Activated CD4-positive, alpha-beta T cell treated with anti-CD3 and anti-CD28 coated beads for 36 hours (primary cell): ENCODE measurements at regions of chr5 and their contacts with region 1.

Region 1: GRCh38 chr5:172412724-172413286 is 41.5 kb downstream of the SH3PXD2B start:
- DNase-seq: peak; percentile 46
- ATAC-seq: peak; percentile 20
- H3K4me3 Mint-ChIP-seq: no peak overlapping the region
- H3K27ac Mint-ChIP-seq: peak overlapping the region; percentile 45
- H3K4me1 Mint-ChIP-seq: peaks cover 33% of the 10 kb centered on the region
- H3K27me3 Mint-ChIP-seq: peaks cover 7% of the 10 kb centered on the region

Region 2: GRCh38 chr5:172199446-172199845 is 213.4 kb before region 1 on chr5:
- CTCF ChIA-PET with region 1: no interaction called
- POLR2A ChIA-PET with region 1: no interaction called
- intact Hi-C with region 1: no loop called
- DNase-seq: no peak
- ATAC-seq: no peak
- H3K4me3 Mint-ChIP-seq: no peak overlapping the region
- H3K27ac Mint-ChIP-seq: no peak overlapping the region
- H3K4me1 Mint-ChIP-seq: no peaks in the 10 kb centered on the region
- H3K27me3 Mint-ChIP-seq: peaks cover 3% of the 10 kb centered on the region

Region 3: DNA sequence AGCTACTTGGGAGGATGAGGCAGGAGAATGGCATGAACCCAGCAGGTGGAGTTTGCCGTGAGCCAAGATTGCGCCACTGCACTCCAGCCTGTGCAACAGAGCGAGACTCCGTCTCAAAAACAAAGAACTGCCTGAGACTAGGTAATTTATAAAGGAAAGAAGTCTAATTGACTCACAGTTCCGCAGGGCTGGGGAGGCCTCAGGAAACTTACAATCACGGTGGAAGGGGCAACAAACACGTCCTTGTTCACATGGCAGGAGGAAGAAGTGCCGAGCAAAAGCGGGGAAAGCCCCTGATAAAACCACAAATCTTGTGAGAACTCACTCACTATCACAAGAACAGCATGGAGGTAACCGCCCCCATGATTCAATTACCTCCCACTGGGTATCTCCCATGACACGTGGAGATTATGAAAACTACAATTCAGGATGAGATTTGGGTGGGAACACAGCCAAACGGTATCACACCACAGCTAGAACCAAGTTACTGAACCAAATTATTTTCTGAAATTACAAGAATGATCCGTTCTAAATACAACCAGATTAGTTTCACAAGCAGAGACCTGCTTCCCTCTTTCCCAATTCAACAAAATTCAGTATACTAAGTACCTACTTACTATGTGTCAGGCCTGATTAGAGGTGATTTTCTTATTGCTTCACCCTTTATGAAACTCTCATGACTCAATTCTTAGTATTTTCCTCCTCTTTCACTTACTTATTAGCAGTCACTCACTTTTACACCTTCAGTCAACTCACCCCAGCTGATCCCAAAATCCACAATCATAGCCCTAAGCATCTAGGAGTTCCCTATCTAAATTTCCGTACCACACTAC is 137.7 kb before region 1 on chr5:
- CTCF ChIA-PET with region 1: no interaction called
- POLR2A ChIA-PET with region 1: interaction called, 3 read pairs
- intact Hi-C with region 1: loop called in 1 of 2 experiments (anchors 1 kb)
- DNase-seq: peak; percentile 77
- ATAC-seq: peak; percentile 92
- H3K4me3 Mint-ChIP-seq: no peak overlapping the region
- H3K27ac Mint-ChIP-seq: peak overlapping the region; percentile 40
- H3K4me1 Mint-ChIP-seq: peaks cover 43% of the 10 kb centered on the region
- H3K27me3 Mint-ChIP-seq: no peaks in the 10 kb centered on the region

Region 4: DNA sequence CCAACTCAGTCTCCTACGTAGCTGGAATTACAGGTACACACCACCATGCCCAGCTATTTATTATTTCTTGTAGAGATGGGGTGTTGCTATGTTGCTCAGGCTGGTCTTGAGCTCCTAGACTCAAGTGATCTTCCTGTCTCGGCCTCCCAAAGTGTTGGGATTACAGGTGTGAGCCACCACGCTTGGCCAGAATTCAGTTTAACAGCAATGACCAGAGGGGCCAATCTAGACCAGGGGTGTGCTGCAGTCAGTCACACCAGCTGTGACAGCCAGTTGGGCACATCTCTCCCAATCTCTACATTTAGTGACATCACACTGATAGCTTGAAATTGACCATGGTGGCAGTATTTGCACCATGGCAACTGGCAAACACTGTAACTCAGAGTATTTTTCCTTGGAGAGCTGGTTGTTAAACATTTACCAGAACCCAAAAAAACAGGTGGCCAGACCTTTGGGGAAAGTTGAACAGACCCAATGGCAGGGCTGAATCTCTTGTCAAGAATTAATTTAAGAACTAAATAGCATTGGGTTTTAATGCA is 61.5 kb before region 1 on chr5:
- CTCF ChIA-PET with region 1: no interaction called
- POLR2A ChIA-PET with region 1: no interaction called
- intact Hi-C with region 1: no loop called
- DNase-seq: no peak
- ATAC-seq: no peak
- H3K4me3 Mint-ChIP-seq: no peak overlapping the region
- H3K27ac Mint-ChIP-seq: no peak overlapping the region
- H3K4me1 Mint-ChIP-seq: no peaks in the 10 kb centered on the region
- H3K27me3 Mint-ChIP-seq: no peaks in the 10 kb centered on the region

Region 5: GRCh38 chr5:172361566-172362238 is 51.1 kb before region 1 on chr5:
- CTCF ChIA-PET with region 1: no interaction called
- POLR2A ChIA-PET with region 1: interaction called, 3 read pairs
- intact Hi-C with region 1: loop called in 1 of 2 experiments (anchors 1 kb)
- DNase-seq: peak; percentile 83
- ATAC-seq: peak; percentile 96
- H3K4me3 Mint-ChIP-seq: no peak overlapping the region
- H3K27ac Mint-ChIP-seq: peak overlapping the region; percentile 88
- H3K4me1 Mint-ChIP-seq: peaks cover 11% of the 10 kb centered on the region
- H3K27me3 Mint-ChIP-seq: peaks cover 2% of the 10 kb centered on the region

Region 6: GRCh38 chr5:172443441-172444109 is 30.8 kb after region 1 on chr5:
- CTCF ChIA-PET with region 1: no interaction called
- POLR2A ChIA-PET with region 1: interaction called, 3 read pairs
- intact Hi-C with region 1: loop called (anchors 1 to 2 kb)
- DNase-seq: peak; percentile 89
- ATAC-seq: peak; percentile 89
- H3K4me3 Mint-ChIP-seq: no peak overlapping the region
- H3K27ac Mint-ChIP-seq: peak overlapping the region; percentile 52
- H3K4me1 Mint-ChIP-seq: peaks cover 14% of the 10 kb centered on the region
- H3K27me3 Mint-ChIP-seq: peaks cover 19% of the 10 kb centered on the region

Region 7: GRCh38 chr5:172868924-172869591 is 456.3 kb after region 1 on chr5:
- CTCF ChIA-PET with region 1: no interaction called
- POLR2A ChIA-PET with region 1: no interaction called
- intact Hi-C with region 1: no loop called
- DNase-seq: peak; percentile 34
- ATAC-seq: peak; percentile 47
- H3K4me3 Mint-ChIP-seq: no peak overlapping the region
- H3K27ac Mint-ChIP-seq: no peak overlapping the region
- H3K4me1 Mint-ChIP-seq: peaks cover 23% of the 10 kb centered on the region
- H3K27me3 Mint-ChIP-seq: no peaks in the 10 kb centered on the region